Astrocyte of the cerebellum (primary cell): ENCODE measurements at regions of chr2 and their contacts with region 1.

Region 1: DNA sequence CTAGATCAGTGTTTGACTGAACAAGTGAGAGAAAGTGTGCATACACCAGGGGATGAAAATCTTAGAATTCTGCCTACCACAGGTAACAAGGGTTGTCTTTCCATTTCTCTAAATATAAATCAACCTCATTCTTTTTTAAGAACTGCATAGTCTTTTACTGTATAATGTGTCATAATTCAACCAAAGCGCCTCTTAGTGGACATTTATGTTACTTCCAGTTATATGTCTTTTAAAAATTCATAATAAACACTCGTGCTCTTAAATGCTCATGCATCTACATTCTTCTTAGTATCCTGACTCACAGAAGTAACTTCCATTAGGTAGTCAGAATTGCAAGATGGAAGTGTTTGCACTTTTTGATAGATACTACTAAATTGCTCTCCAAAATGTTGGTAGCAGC is 76.2 kb downstream of the CHRNA1 start:
- DNase-seq: no peak
- H3K4me3 ChIP-seq: no peak overlapping the region
- CTCF ChIP-seq: no peak

Region 2: GRCh38 chr2:174597345-174598047 is 90.6 kb before region 1 on chr2 and contains the start of gene WIPF1:
- in situ Hi-C with region 1: loop called (anchors 5 kb)
- DNase-seq: peak; percentile 75
- H3K4me3 ChIP-seq: no peak within 1 kb of the TSS
- CTCF ChIP-seq: no peak

Region 3: GRCh38 chr2:174654419-174654941 is 33.6 kb before region 1 on chr2:
- in situ Hi-C with region 1: no loop called
- DNase-seq: no peak
- H3K4me3 ChIP-seq: no peak overlapping the region
- CTCF ChIP-seq: no peak